Activated CD8-positive, alpha-beta T cell treated with anti-CD3 and anti-CD28 coated beads for 36 hours (primary cell): ENCODE measurements at regions of chr15 and their contacts with region 1.

Region 1: DNA sequence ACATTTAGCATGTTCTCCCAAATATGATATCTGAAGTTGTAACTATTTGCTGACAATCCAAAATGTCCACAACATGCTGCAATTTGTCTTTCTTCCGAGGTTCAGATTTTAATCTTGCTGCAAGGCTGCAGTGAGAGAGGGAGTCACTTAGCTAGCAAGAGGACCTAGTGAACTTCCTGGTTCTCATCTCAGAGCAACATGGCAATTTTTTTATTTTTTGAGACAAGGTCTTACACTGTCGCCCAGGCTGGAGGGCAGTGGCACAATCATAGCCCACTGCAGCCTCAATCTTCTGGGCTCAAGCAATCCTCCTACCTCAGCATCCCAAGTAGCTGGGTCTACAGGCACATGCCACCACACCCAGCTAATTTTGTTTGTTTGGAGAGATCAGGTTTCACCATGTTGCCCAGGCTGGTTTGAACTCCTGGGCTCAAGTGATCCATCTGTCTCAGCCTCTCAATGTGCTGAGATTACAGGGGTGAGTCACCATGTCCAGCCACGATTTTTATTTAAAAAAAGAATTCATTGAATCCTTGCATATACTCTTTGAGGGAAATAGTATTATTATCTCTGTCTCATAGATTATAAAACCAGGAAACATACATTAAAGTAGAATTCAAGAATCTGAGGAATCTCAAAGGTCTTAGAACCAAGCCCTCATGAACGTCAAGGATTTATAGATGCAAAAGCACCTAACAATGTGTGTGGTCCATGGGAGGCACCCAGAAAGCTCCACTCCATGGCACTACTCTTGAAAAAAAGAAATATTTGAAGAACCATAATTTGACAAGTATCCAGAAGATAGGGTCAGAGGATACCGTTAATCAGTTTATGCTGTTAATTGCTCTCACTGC is 9.1 kb downstream of the HDC start:
- DNase-seq: no peak
- ATAC-seq: no peak
- H3K4me3 Mint-ChIP-seq: no peak overlapping the region
- H3K27ac Mint-ChIP-seq: no peak overlapping the region
- H3K4me1 Mint-ChIP-seq: peaks cover 26% of the 10 kb centered on the region
- H3K27me3 Mint-ChIP-seq: no peaks in the 10 kb centered on the region
- CTCF ChIP-seq: no peak

Region 2: GRCh38 chr15:50182219-50183013 is 74.0 kb before region 1 on chr15:
- CTCF ChIA-PET with region 1: interaction called, 7 read pairs
- POLR2A ChIA-PET with region 1: interaction called, 11 read pairs
- intact Hi-C with region 1: loop called (anchors 5 kb)
- DNase-seq: peak; percentile 63
- ATAC-seq: peak; percentile 69
- H3K4me3 Mint-ChIP-seq: peak overlapping the region; percentile 93
- H3K27ac Mint-ChIP-seq: peak overlapping the region; percentile 86
- H3K4me1 Mint-ChIP-seq: peaks cover 9% of the 10 kb centered on the region
- H3K27me3 Mint-ChIP-seq: peaks cover 20% of the 10 kb centered on the region
- CTCF ChIP-seq: peak; percentile 0